Common myeloid progenitor, CD34-positive (primary cell): ENCODE measurements at regions of chr16 and their contacts with region 1.

Region 1: DNA sequence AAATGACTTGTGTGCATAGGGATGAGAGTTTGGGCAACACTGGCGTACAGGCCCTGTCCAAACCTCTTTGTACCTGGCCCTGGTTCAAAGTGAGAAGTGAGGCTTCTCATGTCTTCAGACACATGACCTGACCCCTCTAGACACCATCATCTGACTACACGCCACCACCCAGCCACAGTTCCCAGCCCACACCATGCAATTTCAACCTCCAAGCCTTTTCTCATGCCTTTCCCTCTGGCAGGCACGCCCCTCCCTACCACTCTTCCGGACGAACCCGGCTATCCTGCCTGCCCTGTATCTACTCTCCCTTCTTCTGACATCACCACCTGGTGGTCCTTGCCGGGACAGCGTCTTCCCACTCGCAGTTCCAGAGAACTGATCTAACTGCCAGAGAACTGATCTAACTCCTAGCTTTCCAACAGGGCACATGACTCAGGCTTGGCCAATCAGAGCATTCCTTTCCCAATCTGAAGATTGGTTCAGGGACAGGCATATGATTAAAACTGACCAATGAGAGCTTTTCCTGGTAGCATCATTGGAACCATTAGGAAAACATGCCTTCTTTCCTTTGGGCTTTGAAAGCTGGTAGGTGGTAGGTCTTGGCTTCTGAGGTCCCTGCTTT is 27.1 kb upstream of the IL21R start:
- DNase-seq: peak; percentile 76 to 86 (median 81)
- H3K4me3 ChIP-seq: peak overlapping the region in 1 of 7 experiments; percentile 6
- H3K27ac ChIP-seq: no peak overlapping the region
- H3K4me1 ChIP-seq: peaks cover 2 to 60% (median 46%) of the 10 kb centered on the region in 4 experiments
- H3K27me3 ChIP-seq: no peaks in the 10 kb centered on the region

Region 2: DNA sequence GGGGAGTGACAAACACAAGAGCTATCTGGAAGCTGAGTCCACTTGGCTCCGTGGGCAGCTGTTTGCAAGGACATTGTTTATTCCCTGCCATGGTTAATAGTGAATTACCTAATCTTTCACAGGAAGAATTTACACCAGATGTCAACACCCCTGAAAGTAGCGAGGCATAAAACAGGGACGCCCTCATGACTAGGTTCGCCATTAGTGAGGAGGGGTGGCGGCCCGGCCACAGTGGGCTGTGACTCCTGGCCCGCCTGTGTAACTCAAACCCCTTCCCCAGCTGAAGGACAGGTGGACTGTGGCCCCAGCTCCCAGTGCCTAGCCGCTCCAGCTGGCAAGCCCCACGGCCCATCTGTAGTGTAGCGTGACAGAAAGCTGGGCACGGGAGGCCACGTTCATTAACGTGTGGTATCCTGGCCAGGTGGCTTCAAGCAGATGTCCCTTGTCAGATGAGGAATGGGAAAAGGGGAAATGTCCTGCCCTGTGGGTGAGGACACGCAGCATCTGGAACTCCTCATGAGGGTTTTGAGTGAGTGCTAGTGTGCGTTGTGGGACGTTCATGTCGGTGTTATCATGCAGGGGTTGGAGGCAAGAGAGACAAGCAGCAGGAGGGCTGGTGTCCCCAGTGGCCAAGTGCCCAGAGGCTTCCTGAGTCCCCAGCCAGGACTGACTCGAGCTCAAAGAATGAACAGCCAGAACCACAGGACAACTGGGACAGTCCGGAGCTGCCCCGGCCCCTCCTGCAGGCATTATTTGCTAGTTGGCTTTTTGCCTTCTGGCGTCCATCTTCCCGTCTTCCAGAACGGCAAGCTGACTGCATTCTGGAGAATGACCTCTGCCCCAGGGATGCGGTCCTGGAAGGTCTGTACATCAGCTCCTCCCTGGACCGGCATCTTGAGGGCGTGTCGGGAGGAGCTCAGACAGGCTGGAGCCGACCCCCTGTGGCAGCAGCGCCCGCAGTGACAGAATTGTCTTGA is 152.4 kb before region 1 on chr16:
- CTCF ChIA-PET with region 1: interaction called, 17 read pairs
- POLR2A ChIA-PET with region 1: no interaction called
- DNase-seq: no peak
- H3K4me3 ChIP-seq: no peak overlapping the region
- H3K27ac ChIP-seq: no peak overlapping the region
- H3K4me1 ChIP-seq: peaks cover 0 to 16% (median 11%) of the 10 kb centered on the region in 4 experiments
- H3K27me3 ChIP-seq: no peaks in the 10 kb centered on the region

Region 3: GRCh38 chr16:27359051-27359450 is 15.9 kb before region 1 on chr16:
- CTCF ChIA-PET with region 1: no interaction called
- POLR2A ChIA-PET with region 1: no interaction called
- DNase-seq: no peak
- H3K4me3 ChIP-seq: no peak overlapping the region
- H3K27ac ChIP-seq: no peak overlapping the region
- H3K4me1 ChIP-seq: no peaks in the 10 kb centered on the region
- H3K27me3 ChIP-seq: no peaks in the 10 kb centered on the region

Region 4: DNA sequence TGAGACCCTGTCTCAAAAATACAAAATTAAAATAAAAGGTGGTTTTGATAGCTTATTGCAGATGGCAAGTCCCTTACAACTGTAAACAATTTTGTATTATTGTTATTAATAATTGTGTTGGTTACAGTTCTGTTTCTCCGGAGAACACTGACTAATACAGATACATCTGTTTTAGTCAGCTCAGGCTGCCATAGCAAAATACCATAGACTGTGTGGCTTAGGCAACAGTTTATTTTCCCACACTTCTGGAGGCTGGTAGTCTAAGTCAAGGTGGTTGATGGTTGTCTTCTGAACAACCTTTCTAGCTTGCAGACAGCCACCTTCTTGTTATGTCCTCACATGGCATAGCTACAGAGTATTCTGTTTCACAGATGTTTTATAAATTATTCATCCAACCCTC is 12.8 kb after region 1 on chr16:
- CTCF ChIA-PET with region 1: interaction called, 95 read pairs
- POLR2A ChIA-PET with region 1: no interaction called
- DNase-seq: no peak
- H3K4me3 ChIP-seq: no peak overlapping the region
- H3K27ac ChIP-seq: no peak overlapping the region
- H3K4me1 ChIP-seq: peaks cover 4 to 27% (median 6%) of the 10 kb centered on the region in 4 experiments
- H3K27me3 ChIP-seq: no peaks in the 10 kb centered on the region